Calu3 (cell line): ENCODE measurements at regions of chr3 and their contacts with region 1.

Region 1: DNA sequence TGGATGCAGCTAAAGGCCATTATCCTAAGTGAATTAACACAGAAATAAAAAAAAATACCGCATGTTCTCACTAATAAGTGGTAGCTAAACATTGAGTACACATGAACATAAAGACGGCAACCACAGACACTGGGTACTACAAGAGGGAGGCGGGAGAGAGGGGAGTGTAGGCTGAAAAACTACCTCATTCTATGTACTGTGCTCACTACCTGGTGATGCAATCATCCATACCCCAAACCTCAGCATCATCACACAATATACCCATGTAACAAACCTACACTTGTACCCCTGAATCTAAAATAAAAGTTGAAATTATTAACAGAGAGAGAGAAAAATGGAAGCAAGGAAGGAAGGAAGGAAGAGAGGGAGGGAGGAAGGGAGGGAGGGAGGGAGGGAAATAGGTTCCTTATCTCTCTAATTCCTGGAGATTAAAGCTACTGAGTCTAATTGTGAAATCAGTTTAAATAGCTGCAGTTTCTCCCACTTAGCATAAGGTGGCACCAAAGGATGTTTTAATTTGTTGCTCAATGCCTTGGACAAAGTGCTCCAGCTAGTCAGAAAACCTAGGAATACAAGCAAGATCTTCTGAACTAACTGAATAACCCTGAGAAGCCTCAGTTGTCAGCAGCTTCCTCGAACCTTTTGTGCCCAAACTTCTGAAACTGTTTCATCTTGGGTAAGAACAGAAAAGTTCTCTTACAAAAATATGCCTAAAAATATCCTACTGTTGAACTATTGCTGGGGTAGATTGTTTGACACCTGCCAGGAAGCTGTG is 79.4 kb upstream of the ATP11B start:
- DNase-seq: peak; percentile 45
- H3K4me3 Mint-ChIP-seq: no peak overlapping the region
- H3K27ac Mint-ChIP-seq: peak overlapping the region; percentile 24
- H3K4me1 Mint-ChIP-seq: peaks cover 21% of the 10 kb centered on the region
- H3K27me3 Mint-ChIP-seq: no peaks in the 10 kb centered on the region
- CTCF ChIP-seq: peak; percentile 75

Region 2: GRCh38 chr3:182792901-182793662 is 79.2 kb after region 1 on chr3 and contains the start of gene ATP11B:
- CTCF ChIA-PET with region 1: interaction called, 22 read pairs
- intact Hi-C with region 1: loop called (anchors 2 kb)
- DNase-seq: peak; percentile 90
- H3K4me3 Mint-ChIP-seq: peak within 1 kb of the TSS; percentile 90
- H3K27ac Mint-ChIP-seq: peak within 1 kb of the TSS; percentile 87
- H3K4me1 Mint-ChIP-seq: peaks cover 26% of the 10 kb centered on the region
- H3K27me3 Mint-ChIP-seq: no peaks in the 10 kb centered on the region
- CTCF ChIP-seq: no peak
- total RNA-seq, gene ATP11B: 81.9 and 84.0 TPM in 2 replicates

Region 3: GRCh38 chr3:182837855-182838454 is 124.0 kb after region 1 on chr3:
- CTCF ChIA-PET with region 1: interaction called, 49 read pairs
- intact Hi-C with region 1: loop called (anchors 1 kb)
- DNase-seq: no peak
- H3K4me3 Mint-ChIP-seq: no peak overlapping the region
- H3K27ac Mint-ChIP-seq: no peak overlapping the region
- H3K4me1 Mint-ChIP-seq: no peaks in the 10 kb centered on the region
- H3K27me3 Mint-ChIP-seq: no peaks in the 10 kb centered on the region
- CTCF ChIP-seq: peak; percentile 61

Region 4: GRCh38 chr3:182861348-182861747 is 147.4 kb after region 1 on chr3:
- CTCF ChIA-PET with region 1: interaction called, 20 read pairs
- intact Hi-C with region 1: no loop called
- DNase-seq: no peak
- H3K4me3 Mint-ChIP-seq: no peak overlapping the region
- H3K27ac Mint-ChIP-seq: no peak overlapping the region
- H3K4me1 Mint-ChIP-seq: no peaks in the 10 kb centered on the region
- H3K27me3 Mint-ChIP-seq: no peaks in the 10 kb centered on the region
- CTCF ChIP-seq: no peak

Region 5: DNA sequence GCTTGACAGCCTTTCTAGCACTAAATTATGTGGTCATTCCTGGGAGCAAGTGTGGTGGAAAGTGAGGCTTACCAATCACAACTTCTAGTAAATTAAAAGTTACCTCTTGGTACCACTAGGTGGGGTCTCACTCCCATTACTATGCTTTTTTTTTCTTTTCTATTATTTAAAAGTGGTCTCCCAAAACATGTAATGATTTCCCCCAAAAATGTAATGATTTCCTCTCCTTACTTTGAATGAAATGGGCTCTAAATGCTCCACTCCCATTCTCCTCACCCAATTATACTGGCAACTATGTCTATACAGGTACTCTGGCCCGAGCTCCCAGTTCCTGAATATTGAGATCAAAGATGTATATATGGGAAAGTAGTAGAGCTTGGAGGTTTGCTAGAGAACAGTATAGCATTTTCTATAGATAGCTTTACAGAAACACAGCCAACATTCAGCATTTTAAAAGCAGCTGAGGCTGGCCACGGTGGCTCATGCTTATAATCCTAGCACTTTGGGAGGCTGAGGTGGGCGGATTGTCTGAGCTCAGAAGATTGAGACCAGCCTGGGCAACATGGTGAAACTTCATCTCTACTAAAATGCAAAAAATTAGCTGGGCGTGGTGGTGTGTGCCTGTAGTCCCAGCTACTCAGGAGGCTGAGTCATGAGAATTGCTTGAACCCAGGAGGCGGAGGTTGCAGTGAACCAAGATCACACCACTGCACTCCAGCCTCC is 195.5 kb after region 1 on chr3:
- CTCF ChIA-PET with region 1: interaction called, 4 read pairs
- intact Hi-C with region 1: loop called (anchors 2 kb)
- DNase-seq: no peak
- H3K4me3 Mint-ChIP-seq: no peak overlapping the region
- H3K27ac Mint-ChIP-seq: no peak overlapping the region
- H3K4me1 Mint-ChIP-seq: no peaks in the 10 kb centered on the region
- H3K27me3 Mint-ChIP-seq: no peaks in the 10 kb centered on the region
- CTCF ChIP-seq: peak; percentile 31